Activated CD4-positive, alpha-beta memory T cell treated with anti-CD3 and anti-CD28 coated beads, Interleukin-2, amount 10 ng/mL, durations not matched to agents 7 days and 5 days (primary cell): ENCODE measurements at regions of chr12 and their contacts with region 1.

Region 1: DNA sequence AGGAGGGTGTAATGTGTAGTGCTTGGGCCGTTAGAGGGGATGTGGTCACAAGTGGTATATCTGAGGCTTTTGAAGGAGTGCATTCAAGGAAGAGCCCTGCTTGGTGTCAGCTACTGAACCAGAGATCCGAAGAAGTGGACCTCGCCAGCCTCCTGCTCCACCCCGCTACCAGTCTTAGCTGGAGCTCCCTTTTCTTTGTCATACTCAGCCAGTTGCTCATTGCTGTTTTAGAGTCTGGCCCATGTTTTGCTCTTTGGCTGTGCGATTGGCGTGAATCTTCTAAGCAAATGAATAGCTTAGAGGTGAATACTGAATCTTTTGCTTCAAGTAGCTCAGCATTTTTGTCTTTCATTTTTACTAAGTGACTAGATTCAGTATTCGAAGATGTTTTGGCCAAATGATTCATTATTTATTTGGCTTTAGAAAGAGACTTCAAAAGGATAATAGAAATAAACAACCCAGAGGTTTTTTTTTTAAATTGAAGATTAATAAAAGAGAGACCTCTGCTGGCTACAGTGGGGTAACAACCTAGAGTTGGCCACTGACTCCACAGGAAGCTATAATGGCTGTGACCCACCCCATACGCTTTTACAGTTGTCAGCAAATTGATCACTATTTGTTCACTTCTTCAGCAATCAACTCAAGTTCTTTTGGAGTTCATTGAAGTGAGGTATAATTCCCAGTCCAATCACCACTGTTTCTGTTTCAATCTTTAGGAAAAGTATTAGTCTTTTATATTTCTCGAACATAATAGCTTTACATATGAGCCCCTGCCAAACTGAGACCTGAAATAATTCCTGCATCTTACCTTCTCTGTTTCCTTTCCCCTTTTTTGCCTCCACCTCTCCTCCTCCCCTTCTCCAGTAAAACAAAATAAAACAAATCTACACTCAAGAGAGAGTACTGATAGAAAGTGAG is 19.9 kb downstream of the CDKN1B start:
- DNase-seq: peak; percentile 77
- H3K4me3 Mint-ChIP-seq: peak overlapping the region; percentile 68
- H3K27ac Mint-ChIP-seq: peak overlapping the region; percentile 94
- H3K4me1 Mint-ChIP-seq: peaks cover 67% of the 10 kb centered on the region
- H3K27me3 Mint-ChIP-seq: no peaks in the 10 kb centered on the region

Region 2: DNA sequence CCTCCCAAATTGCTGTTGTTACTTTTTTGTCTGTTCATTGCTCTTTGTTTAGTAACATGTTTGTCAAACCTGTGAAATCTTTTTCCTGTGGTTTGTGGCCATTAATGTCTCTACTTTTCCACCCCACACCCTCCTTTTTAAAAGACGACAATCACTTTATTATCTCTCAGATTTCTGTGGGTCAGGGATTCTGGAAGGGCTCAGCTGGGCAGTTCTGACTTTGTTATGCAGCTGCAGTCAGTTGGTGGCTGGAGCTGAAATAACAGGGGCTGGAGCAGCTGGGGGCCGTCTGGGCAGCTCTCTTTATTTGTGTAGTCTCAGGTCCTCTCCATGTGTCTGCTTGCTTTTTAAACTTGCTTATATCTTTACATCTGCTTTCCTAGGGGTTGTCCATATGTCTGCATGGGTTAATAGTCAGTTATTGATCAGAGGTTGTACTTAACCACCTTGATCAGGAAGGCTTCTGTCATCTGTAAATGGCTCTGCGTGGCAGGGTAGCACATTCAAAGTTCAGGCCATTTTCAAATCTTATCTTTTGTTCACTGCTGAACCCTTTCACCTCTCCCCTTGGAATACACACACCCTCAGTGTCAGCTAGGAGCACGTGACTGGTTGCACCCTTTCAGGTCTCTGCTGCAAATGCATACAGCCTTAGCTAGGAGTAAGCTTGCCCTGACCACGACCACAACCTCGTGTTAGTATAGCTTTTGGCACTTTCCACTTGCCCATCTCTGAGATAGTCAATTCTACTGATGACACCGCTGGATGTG is 352.3 kb before region 1 on chr12:
- CTCF ChIA-PET with region 1: interaction called, 49 read pairs
- POLR2A ChIA-PET with region 1: interaction called, 12 read pairs
- DNase-seq: peak; percentile 85
- H3K4me3 Mint-ChIP-seq: peak overlapping the region; percentile 57
- H3K27ac Mint-ChIP-seq: peak overlapping the region; percentile 97
- H3K4me1 Mint-ChIP-seq: peaks cover 83% of the 10 kb centered on the region
- H3K27me3 Mint-ChIP-seq: no peaks in the 10 kb centered on the region

Region 3: GRCh38 chr12:12486661-12487240 is 250.3 kb before region 1 on chr12:
- CTCF ChIA-PET with region 1: interaction called, 3 read pairs
- POLR2A ChIA-PET with region 1: interaction called, 35 read pairs
- DNase-seq: no peak
- H3K4me3 Mint-ChIP-seq: no peak overlapping the region
- H3K27ac Mint-ChIP-seq: peak overlapping the region; percentile 77
- H3K4me1 Mint-ChIP-seq: peaks cover 66% of the 10 kb centered on the region
- H3K27me3 Mint-ChIP-seq: no peaks in the 10 kb centered on the region

Region 4: DNA sequence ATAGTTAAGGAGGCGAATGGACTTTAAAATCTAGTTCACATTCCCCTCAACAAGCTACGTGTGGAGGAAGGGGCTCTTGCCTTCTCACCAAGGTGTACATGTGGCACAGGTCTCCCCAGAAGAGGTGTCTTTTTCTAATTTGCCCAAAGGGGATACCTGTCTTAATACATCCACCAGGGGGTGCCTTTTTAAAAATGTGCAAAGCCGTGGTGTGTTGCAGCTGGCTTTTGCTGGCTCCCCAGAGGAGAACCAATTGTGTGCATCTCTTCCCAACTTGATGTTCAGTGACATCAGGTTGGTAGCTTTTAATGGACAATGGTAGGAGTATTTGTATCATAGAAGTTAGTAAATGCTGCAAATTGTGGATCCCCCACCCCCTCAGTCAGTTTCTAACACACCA is 91.5 kb before region 1 on chr12:
- CTCF ChIA-PET with region 1: interaction called, 7 read pairs
- POLR2A ChIA-PET with region 1: interaction called, 11 read pairs
- DNase-seq: peak; percentile 35
- H3K4me3 Mint-ChIP-seq: no peak overlapping the region
- H3K27ac Mint-ChIP-seq: peak overlapping the region; percentile 55
- H3K4me1 Mint-ChIP-seq: peaks cover 12% of the 10 kb centered on the region
- H3K27me3 Mint-ChIP-seq: no peaks in the 10 kb centered on the region

Region 5: DNA sequence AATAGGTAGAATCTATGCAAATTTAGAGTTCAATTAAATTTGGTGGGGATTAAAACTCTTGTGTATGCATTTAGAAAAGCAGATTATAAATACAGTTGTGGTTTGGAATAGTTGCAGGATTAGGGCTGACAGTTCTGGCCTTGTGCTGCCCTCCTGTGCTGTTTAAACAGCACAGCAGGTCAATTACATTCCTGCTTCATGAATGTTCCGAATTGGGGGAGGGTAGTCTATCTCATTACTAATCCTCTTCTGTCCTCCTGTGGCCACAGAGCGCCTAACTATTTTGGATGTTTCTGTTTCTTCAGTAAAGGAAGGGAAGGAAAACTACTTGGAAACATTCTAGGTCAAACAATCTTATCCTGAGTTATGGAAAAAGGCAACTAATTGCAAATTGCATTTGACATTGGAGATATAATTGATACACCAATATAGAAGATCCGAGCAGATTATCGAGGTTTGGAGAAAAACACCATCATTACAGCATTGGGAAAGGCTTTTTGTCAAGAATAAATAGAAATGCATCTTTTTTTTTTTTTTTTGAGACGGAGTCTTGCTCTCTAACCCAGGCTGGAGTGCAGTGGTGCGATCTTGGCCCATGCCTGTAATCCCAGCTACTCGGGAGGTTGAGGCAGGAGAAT is 32.3 kb before region 1 on chr12:
- CTCF ChIA-PET with region 1: interaction called, 6 read pairs
- POLR2A ChIA-PET with region 1: interaction called, 83 read pairs
- DNase-seq: no peak
- H3K4me3 Mint-ChIP-seq: no peak overlapping the region
- H3K27ac Mint-ChIP-seq: no peak overlapping the region
- H3K4me1 Mint-ChIP-seq: peaks cover 27% of the 10 kb centered on the region
- H3K27me3 Mint-ChIP-seq: no peaks in the 10 kb centered on the region

Region 6: GRCh38 chr12:12786716-12787601 is 49.9 kb after region 1 on chr12:
- CTCF ChIA-PET with region 1: interaction called, 10 read pairs
- POLR2A ChIA-PET with region 1: interaction called, 24 read pairs
- DNase-seq: peak; percentile 75
- H3K4me3 Mint-ChIP-seq: peak overlapping the region; percentile 78
- H3K27ac Mint-ChIP-seq: no peak overlapping the region
- H3K4me1 Mint-ChIP-seq: peaks cover 43% of the 10 kb centered on the region
- H3K27me3 Mint-ChIP-seq: no peaks in the 10 kb centered on the region

Region 7: GRCh38 chr12:12934556-12934955 is 197.5 kb after region 1 on chr12:
- CTCF ChIA-PET with region 1: no interaction called
- POLR2A ChIA-PET with region 1: no interaction called
- DNase-seq: no peak
- H3K4me3 Mint-ChIP-seq: no peak overlapping the region
- H3K27ac Mint-ChIP-seq: no peak overlapping the region
- H3K4me1 Mint-ChIP-seq: no peaks in the 10 kb centered on the region
- H3K27me3 Mint-ChIP-seq: peaks cover 20% of the 10 kb centered on the region